ENCODE measurements at regions of chr10 and their contacts with region 1.

Region 1: DNA sequence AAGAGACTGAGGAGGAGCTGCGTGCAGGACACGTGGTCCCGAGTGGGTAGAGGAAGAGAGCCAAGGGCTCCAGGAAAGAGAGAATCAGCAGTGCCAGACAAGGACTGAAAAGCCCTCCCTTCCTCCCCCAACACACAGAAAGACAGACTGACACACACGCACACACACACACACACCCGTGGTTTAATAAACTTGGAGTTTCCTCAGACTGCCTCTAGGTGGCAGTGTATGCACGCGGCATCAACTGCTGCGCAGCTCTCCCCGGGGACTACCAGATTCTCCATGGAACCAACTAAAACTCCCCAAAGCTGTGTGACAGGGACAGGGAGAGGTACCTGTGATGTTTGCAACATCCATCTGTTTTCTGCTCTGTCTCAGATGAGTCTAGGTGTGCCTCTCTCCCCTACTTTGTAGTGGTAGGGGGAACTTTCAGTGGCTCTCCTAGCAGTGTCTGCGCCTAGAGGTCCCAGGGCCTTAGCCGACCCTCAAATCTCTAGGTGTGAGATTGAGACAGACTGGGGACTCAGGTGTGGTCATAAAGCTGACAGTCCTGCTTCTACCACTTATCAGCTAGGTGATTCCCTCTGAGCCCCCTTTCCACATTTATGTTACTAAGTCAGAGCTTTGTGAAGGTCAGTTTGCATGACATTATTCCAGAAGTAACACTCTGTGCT is 9.3 kb upstream of the TSPAN14 start:
- DNase-seq: peak; percentile 87 to 89 (median 88)
- ATAC-seq: peak; percentile 90
- H3K4me3 ChIP-seq: no peak overlapping the region
- H3K27ac ChIP-seq: no peak overlapping the region
- H3K4me1 ChIP-seq: peaks cover 15 to 22% of the 10 kb centered on the region in 2 experiments
- H3K27me3 ChIP-seq: no peaks in the 10 kb centered on the region; a peak in 1 of 5 replicates
- CTCF ChIP-seq: peak; percentile 96 to 99 (median 98)
- EP300 ChIP-seq: no peak
- POLR2A ChIP-seq: no peak
- RAD21 ChIP-seq: peak; percentile 99 to 100

Region 2: DNA sequence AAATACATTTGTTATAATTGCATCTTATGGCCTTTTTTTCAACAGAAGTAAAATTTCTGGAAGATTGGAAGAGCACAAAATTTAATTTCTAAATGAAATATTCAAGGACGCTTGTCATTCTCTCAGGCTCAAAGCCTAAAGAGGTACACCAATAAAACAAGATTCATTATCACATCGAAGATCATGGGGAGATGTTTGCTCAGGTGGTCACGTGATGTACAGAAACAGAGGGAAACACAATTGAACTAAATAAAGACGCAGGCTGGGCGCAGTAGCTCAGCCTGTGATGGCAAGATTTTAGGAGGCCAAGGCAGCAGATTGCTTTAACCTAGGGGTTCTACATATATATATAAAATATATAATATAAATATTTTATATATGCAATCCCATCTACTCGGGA is 403.6 kb before region 1 on chr10:
- CTCF ChIA-PET with region 1: no interaction called
- POLR2A ChIA-PET with region 1: no interaction called
- in situ Hi-C with region 1: no loop called
- intact Hi-C with region 1: no loop called
- DNase-seq: no peak
- ATAC-seq: no peak
- H3K4me3 ChIP-seq: no peak overlapping the region
- H3K27ac ChIP-seq: no peak overlapping the region
- H3K4me1 ChIP-seq: no peaks in the 10 kb centered on the region; a peak in 1 of 5 replicates
- H3K27me3 ChIP-seq: 0 out of 5 replicates have a peak, but pooled peaks cover 0 to 9% of the 10 kb centered on the region in 2 experiments
- CTCF ChIP-seq: no peak
- EP300 ChIP-seq: no peak
- POLR2A ChIP-seq: no peak
- RAD21 ChIP-seq: no peak

Region 3: DNA sequence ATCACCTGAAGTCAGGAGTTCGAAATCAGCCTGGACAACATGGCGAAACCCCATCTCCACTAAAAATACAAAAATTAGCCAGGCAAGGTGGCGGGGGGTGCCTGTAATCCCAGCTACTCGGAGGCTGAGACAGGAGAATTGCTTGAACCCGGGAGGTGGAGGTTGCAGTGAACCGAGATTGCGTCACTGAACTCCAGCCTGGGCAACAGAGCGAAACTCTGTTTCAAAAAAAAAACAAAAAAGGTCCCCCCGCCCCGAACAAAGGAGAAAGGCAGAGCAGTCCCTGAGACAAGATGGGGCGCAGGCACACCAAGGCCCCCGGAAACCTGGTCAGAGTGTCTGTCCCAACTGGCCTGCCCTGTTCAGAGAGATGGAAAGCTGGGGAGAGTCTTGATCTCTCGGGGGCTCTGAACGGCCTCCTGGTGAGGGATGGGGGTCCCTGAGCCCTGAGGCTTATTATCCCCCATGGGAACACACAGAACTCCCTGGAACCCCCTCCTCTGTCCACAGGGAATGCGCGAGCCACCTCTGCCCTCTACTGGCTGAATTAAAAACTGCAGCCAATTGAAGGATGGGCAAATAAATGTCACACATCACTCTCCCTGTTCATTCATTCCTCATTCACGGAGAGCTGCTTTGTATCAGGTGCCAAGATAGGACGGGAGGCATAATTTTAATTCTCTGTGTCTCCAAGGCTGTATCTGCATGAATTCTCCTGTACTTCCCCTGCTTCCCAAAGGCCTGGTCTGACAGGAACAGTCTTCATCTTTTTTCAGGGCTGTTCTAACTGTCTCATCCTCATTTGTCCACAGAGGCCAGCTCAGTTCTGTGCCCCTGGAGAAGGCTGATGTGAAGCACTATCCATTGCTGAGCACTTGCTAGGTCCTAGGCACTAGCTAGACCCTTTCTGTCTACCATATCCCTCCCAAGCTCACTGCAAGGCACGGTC is 184.2 kb before region 1 on chr10:
- CTCF ChIA-PET with region 1: no interaction called
- POLR2A ChIA-PET with region 1: no interaction called
- in situ Hi-C with region 1: no loop called
- intact Hi-C with region 1: loop called (anchors 5 kb)
- DNase-seq: peak; percentile 58 to 69 (median 64)
- ATAC-seq: peak; percentile 75
- H3K4me3 ChIP-seq: no peak overlapping the region
- H3K27ac ChIP-seq: no peak overlapping the region
- H3K4me1 ChIP-seq: peaks cover 0 to under 1% of the 10 kb centered on the region in 2 experiments; a peak in 1 of 5 replicates
- H3K27me3 ChIP-seq: peaks cover 6 to 39% of the 10 kb centered on the region in 2 experiments
- CTCF ChIP-seq: peak; percentile 81 to 96 (median 85)
- EP300 ChIP-seq: no peak
- POLR2A ChIP-seq: no peak
- RAD21 ChIP-seq: peak; percentile 35 to 74; a peak in 3 of 4 replicates

Region 4: GRCh38 chr10:80382989-80383388 is 61.8 kb before region 1 on chr10:
- CTCF ChIA-PET with region 1: interaction called, 16 read pairs
- POLR2A ChIA-PET with region 1: interaction called, 3 read pairs
- in situ Hi-C with region 1: loop called (anchors 5 kb)
- intact Hi-C with region 1: loop called (anchors 1 kb)
- DNase-seq: peak in 2 of 4 experiments; percentile 57
- ATAC-seq: peak; percentile 48
- H3K4me3 ChIP-seq: no peak overlapping the region
- H3K27ac ChIP-seq: no peak overlapping the region
- H3K4me1 ChIP-seq: no peaks in the 10 kb centered on the region
- H3K27me3 ChIP-seq: peaks cover 5% of the 10 kb centered on the region in 2 experiments; a peak in 4 of 5 replicates
- CTCF ChIP-seq: peak; percentile 66 to 90 (median 79)
- EP300 ChIP-seq: no peak
- POLR2A ChIP-seq: no peak
- RAD21 ChIP-seq: peak; percentile 82

Region 5: DNA sequence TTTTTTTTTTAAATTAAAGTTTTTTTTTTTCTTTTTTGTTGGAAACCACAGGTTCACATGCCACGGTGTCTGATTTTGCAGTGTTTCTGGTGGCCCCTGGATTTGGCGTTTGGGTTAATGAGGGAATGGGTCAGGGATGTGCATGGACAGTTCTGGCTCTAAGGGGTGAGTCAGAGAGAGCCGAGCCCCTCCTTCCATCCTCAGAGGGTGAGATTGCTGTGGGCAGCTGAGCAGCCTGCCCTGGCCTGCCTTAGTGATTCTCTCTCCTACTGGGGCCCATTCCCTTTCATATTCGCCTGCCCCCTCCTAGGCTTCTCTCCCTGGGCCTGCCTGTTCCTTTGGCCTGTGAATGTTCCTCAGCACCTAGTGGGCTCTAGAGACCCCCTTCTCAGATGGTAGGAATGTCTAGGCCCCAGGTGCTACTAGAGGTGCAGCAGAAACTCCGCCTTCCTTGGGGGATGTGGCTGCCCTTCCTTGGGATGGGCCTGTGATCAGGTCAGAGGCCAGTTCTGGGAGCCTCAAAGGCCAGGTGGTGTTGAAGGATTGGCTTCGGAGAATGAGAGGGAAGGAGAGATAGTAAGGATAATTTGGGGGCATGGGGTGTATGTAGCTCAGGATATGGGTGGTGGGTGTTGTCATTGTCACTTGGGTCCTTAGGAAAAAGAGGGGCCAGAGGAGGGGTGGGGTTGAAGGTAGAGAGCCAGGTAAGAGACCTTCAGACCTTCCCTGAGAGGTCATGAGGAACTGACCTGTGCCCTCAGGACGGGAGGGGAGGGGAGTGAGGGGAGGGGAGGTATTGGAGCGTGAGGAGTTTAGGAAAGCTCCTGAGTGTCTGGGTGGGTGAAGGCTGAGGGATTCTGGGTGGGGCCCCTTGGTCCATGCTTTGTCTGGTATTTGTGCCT is 29.2 kb after region 1 on chr10:
- CTCF ChIA-PET with region 1: no interaction called
- POLR2A ChIA-PET with region 1: no interaction called
- in situ Hi-C with region 1: no loop called
- intact Hi-C with region 1: no loop called
- DNase-seq: no peak
- ATAC-seq: peak; percentile 14
- H3K4me3 ChIP-seq: no peak overlapping the region
- H3K27ac ChIP-seq: no peak overlapping the region
- H3K4me1 ChIP-seq: peaks cover 13 to 20% of the 10 kb centered on the region in 2 experiments; a peak in 4 of 5 replicates
- H3K27me3 ChIP-seq: no peaks in the 10 kb centered on the region
- CTCF ChIP-seq: no peak
- EP300 ChIP-seq: no peak
- POLR2A ChIP-seq: no peak
- RAD21 ChIP-seq: no peak

Region 6: DNA sequence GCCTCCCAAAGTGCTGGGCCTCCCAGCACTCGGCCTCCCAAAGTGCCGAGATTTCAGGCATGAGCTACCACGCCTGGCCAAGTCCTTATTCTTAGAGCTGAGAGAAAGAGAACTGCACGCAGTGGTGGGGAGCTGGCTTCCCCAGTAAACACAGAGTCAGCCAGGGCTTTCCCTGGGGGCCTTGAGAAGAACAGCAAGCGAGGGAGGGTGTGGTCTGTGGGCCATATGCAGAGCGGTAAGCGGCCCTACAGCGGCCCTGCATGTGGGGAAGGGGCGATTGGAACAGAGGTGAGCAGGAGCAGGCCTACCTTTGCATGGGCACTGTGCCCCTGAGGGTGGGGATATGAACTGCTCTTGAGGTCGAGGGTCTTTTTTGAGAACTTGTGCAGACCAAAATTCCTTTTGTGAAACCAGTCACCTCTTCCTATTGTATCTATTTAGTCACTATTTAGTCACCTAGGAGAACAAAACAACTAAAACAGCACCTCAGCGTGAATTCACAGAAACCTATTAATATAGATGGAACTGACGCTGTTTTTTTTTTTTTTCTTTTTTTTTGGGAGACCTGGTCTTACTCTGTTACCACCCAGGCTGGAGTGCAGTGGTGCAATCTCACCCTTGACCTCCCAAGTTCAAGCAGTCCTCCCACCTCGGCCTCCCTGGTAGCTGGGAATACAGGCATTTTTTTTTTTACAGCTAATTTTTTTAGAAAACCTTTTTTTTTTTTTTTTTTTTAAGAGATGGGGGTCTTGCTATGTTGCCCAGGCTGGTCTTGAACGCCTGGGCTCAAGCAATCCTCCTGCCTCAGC is 56.0 kb after region 1 on chr10:
- CTCF ChIA-PET with region 1: interaction called, 79 read pairs
- POLR2A ChIA-PET with region 1: interaction called, 16 read pairs
- in situ Hi-C with region 1: loop called (anchors 5 kb)
- intact Hi-C with region 1: loop called (anchors 1 kb)
- DNase-seq: peak in 2 of 4 experiments; percentile 47 to 64
- ATAC-seq: no peak
- H3K4me3 ChIP-seq: no peak overlapping the region
- H3K27ac ChIP-seq: peak overlapping the region; percentile 29; the same call in 2 of the 3 replicates
- H3K4me1 ChIP-seq: peaks cover 82 to 83% of the 10 kb centered on the region in 2 experiments
- H3K27me3 ChIP-seq: no peaks in the 10 kb centered on the region
- CTCF ChIP-seq: 0 out of 6 replicates have a peak, but pooled peaks of 1 of the 3 experiments have one; percentile 5
- EP300 ChIP-seq: no peak
- POLR2A ChIP-seq: no peak
- RAD21 ChIP-seq: no peak

Region 7: DNA sequence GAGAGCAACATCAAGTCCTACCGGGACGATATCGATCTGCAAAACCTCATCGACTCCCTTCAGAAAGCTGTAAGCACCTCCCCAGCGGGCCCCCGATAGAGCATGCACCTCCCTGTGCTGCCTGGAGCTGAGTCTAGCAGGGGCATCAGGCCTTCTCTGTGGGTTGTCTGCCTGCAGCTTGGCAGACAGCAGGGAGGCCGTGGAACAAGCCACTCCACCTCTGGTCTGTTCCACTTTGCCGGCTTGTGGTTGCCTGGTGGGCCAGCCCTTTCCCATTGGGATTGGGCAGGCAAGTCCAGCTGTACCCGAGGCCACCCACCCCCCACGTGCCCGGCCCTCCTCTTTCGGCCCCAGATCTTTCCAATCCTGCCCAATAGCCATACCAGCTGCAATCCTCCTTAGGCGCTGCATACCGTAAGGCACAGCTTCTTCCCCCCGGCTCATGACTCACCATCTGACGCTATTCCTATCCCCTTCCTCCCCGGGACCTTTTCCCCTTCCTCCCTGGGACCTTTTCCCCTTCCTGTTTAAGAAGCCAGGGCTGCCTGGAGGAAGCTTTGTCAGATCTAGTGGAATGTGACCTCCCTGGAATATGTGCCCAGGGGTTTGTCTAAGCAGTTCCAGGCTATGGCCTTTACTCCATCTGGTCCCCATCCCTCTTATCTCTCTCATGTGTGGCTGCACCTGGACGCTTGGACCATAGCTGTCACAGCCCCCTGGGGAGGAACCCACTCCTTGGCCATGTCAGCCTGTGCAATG is 64.8 kb after region 1 on chr10:
- CTCF ChIA-PET with region 1: interaction called, 79 read pairs
- POLR2A ChIA-PET with region 1: interaction called, 16 read pairs
- in situ Hi-C with region 1: loop called (anchors 5 kb)
- intact Hi-C with region 1: loop called (anchors 1 kb)
- DNase-seq: no peak
- ATAC-seq: no peak
- H3K4me3 ChIP-seq: no peak overlapping the region
- H3K27ac ChIP-seq: no peak overlapping the region
- H3K4me1 ChIP-seq: peaks cover 12 to 24% of the 10 kb centered on the region in 2 experiments; a peak in 4 of 5 replicates
- H3K27me3 ChIP-seq: no peaks in the 10 kb centered on the region
- CTCF ChIP-seq: no peak
- EP300 ChIP-seq: no peak
- POLR2A ChIP-seq: no peak
- RAD21 ChIP-seq: no peak

Region 8: GRCh38 chr10:80599424-80599847 is 154.7 kb after region 1 on chr10:
- CTCF ChIA-PET with region 1: no interaction called
- POLR2A ChIA-PET with region 1: no interaction called
- in situ Hi-C with region 1: no loop called
- intact Hi-C with region 1: loop called (anchors 5 kb)
- DNase-seq: peak; percentile 80 to 87 (median 82)
- ATAC-seq: peak; percentile 95
- H3K4me3 ChIP-seq: no peak overlapping the region
- H3K27ac ChIP-seq: no peak overlapping the region
- H3K4me1 ChIP-seq: peaks cover 0 to 4% of the 10 kb centered on the region in 2 experiments; a peak in 2 of 5 replicates
- H3K27me3 ChIP-seq: peaks cover 9 to 28% of the 10 kb centered on the region in 2 experiments; a peak in 4 of 5 replicates
- CTCF ChIP-seq: peak; percentile 91 to 98 (median 92)
- EP300 ChIP-seq: no peak
- POLR2A ChIP-seq: no peak
- RAD21 ChIP-seq: peak; percentile 47 to 75

Region 9: GRCh38 chr10:80924063-80924952 is 479.5 kb after region 1 on chr10:
- CTCF ChIA-PET with region 1: no interaction called
- POLR2A ChIA-PET with region 1: no interaction called
- in situ Hi-C with region 1: no loop called
- intact Hi-C with region 1: loop called (anchors 5 kb)
- DNase-seq: peak; percentile 34 to 72 (median 49)
- ATAC-seq: peak; percentile 93
- H3K4me3 ChIP-seq: no peak overlapping the region
- H3K27ac ChIP-seq: no peak overlapping the region
- H3K4me1 ChIP-seq: no peaks in the 10 kb centered on the region
- H3K27me3 ChIP-seq: no peaks in the 10 kb centered on the region
- CTCF ChIP-seq: peak; percentile 67 to 74 (median 70)
- EP300 ChIP-seq: no peak
- POLR2A ChIP-seq: no peak
- RAD21 ChIP-seq: peak; percentile 60 to 73